HepG2 (cell line): ENCODE measurements at regions of chr9 and their contacts with region 1.

Region 1: DNA sequence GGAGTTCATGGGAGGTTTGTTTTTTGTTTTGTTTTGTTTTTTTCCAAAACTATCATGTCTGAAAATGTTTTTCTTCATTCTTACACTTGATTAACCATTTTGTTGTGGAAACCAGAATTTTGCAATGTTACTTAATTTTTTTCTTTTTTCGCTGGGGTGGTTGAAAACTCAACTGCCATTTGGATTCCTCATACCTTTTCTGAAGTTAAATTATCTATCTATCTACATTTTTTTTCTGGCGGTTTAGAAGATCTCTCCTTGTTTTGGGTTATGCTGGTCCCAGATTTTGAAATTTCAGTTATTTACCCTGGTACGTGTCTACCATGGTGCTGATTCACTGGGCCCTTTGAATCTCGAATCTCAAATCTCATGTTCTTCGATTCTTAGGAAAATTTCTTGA is 316.2 kb upstream of the SMARCA2 start:
- DNase-seq: no peak
- ATAC-seq: no peak
- H3K4me3 ChIP-seq: no peak overlapping the region
- H3K27ac ChIP-seq: no peak overlapping the region
- H3K4me1 ChIP-seq: no peaks in the 10 kb centered on the region
- H3K27me3 ChIP-seq: no peaks in the 10 kb centered on the region
- CTCF ChIP-seq: no peak
- EP300 ChIP-seq: no peak
- POLR2A ChIP-seq: no peak
- RAD21 ChIP-seq: no peak

Region 2: GRCh38 chr9:776086-776485 is 922.9 kb before region 1 on chr9:
- CTCF ChIA-PET with region 1: no interaction called
- POLR2A ChIA-PET with region 1: no interaction called
- in situ Hi-C with region 1: no loop called
- intact Hi-C with region 1: loop called (anchors 10 kb)
- DNase-seq: no peak
- ATAC-seq: no peak
- H3K4me3 ChIP-seq: no peak overlapping the region
- H3K27ac ChIP-seq: no peak overlapping the region
- H3K4me1 ChIP-seq: no peaks in the 10 kb centered on the region
- H3K27me3 ChIP-seq: no peaks in the 10 kb centered on the region; a peak in 1 of 5 replicates
- CTCF ChIP-seq: no peak
- EP300 ChIP-seq: no peak
- POLR2A ChIP-seq: no peak
- RAD21 ChIP-seq: no peak

Region 3: GRCh38 chr9:1580215-1580614 is 118.8 kb before region 1 on chr9:
- CTCF ChIA-PET with region 1: no interaction called
- POLR2A ChIA-PET with region 1: no interaction called
- in situ Hi-C with region 1: no loop called
- intact Hi-C with region 1: loop called (anchors 5 kb)
- DNase-seq: no peak
- ATAC-seq: no peak
- H3K4me3 ChIP-seq: no peak overlapping the region
- H3K27ac ChIP-seq: no peak overlapping the region
- H3K4me1 ChIP-seq: no peaks in the 10 kb centered on the region
- H3K27me3 ChIP-seq: no peaks in the 10 kb centered on the region
- CTCF ChIP-seq: no peak
- EP300 ChIP-seq: no peak
- POLR2A ChIP-seq: no peak
- RAD21 ChIP-seq: no peak

Region 4: DNA sequence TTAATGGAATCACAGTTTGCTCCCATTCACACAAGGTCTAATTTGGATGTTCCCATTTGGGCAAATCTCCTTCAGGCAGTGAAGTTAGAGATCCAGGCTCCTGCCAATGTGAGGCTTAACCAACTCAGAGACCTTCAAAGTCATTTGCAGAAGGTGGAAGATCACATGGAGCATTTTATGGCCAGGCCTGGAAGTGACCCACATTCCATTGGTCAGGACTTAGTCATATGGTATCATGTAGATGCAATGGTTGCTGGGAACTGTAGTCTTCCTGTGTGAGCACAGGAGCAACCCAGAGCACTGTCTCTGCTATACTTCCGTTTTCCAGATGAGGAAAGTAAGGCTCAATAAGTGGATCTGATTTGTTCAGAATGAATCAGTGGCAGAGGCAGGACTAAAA is 23.4 kb after region 1 on chr9:
- CTCF ChIA-PET with region 1: no interaction called
- POLR2A ChIA-PET with region 1: no interaction called
- in situ Hi-C with region 1: no loop called
- intact Hi-C with region 1: no loop called
- DNase-seq: no peak
- ATAC-seq: peak; percentile 46; the same call in 2 of the 3 replicates
- H3K4me3 ChIP-seq: no peak overlapping the region
- H3K27ac ChIP-seq: no peak overlapping the region
- H3K4me1 ChIP-seq: no peaks in the 10 kb centered on the region
- H3K27me3 ChIP-seq: no peaks in the 10 kb centered on the region
- CTCF ChIP-seq: no peak
- EP300 ChIP-seq: no peak
- POLR2A ChIP-seq: no peak
- RAD21 ChIP-seq: no peak